ENCODE measurements at regions of chr3 and their contacts with region 1.

Region 1: DNA sequence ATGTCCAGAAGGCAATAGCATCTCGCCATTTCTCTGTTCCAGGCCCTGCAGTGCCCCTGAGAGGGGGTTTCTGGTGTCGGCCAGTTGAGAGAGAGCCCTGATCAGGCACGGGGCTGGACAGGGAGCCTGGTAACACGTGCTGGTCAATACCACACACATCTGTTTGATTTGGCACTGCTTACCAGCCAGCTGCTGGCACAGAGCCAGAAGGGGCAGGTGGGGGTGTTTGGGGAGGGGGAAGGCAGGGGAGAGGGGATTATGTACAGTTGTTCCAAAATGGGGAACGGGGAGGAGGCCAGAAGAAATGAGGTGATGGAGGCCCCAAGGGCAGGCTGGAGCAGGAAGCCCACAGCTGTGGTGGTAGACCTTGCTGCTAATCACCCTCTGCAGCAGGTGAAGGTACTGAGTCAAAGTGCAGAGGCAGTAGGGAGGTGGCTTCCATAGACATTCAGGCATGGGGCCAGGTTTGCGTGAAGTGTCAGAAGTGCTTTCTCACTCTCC is 153.5 kb upstream of the LPP start:
- DNase-seq: no peak
- H3K4me3 Mint-ChIP-seq: peak overlapping the region; percentile 58
- H3K27ac Mint-ChIP-seq: peak overlapping the region; percentile 90
- H3K4me1 Mint-ChIP-seq: peaks cover 58% of the 10 kb centered on the region
- H3K27me3 Mint-ChIP-seq: no peaks in the 10 kb centered on the region

Region 2: DNA sequence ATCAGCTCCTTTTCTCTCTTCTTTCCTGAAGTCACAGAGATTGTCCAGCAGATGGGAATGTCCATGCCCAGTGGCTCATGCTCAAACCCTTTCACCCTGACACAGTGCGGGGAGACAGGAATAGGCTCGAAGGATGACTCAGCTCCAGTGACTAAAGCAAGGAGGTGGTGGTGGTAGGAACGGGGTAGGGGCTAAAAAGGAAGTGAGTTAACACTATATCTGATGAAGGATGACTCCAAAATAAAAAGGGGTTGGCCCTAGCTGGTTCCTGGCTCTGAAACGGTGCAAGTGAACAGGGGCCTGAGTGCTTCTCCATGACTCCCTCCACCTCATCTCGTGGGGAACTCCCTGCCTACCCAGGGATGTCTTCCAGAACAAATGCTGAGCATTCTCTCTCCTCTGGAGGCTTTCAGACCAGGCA is 13.9 kb before region 1 on chr3:
- CTCF ChIA-PET with region 1: interaction called, 5 read pairs
- POLR2A ChIA-PET with region 1: no interaction called
- intact Hi-C with region 1: loop called (anchors 1 kb)
- DNase-seq: peak; percentile 77
- H3K4me3 Mint-ChIP-seq: peak overlapping the region; percentile 2
- H3K27ac Mint-ChIP-seq: peak overlapping the region; percentile 83
- H3K4me1 Mint-ChIP-seq: peaks cover 56% of the 10 kb centered on the region
- H3K27me3 Mint-ChIP-seq: no peaks in the 10 kb centered on the region